ENCODE measurements at regions of chr6 and their contacts with region 1.

Region 1: DNA sequence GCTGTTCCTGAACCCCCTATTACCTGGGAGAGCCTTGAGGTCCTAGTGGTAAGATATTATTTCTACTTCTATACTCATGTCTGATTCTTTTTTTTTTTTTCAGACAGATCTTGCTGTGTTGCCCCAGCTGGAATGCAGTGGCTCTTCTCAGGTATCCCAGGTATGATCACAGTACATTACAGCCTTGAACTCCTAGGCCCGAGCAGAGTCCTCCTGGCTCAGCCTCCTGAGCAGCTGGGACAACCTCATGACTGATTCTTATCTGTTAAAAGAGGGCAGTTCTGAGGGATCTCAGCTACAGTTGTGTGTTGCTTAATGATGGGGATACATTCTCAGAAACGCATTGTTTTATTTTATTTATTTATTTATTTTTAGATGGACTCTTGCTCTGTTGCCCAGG is 30.2 kb downstream of the BAK1 start:
- DNase-seq: no peak
- ATAC-seq: no peak
- H3K4me3 ChIP-seq: no peak overlapping the region
- H3K27ac ChIP-seq: no peak overlapping the region
- H3K4me1 ChIP-seq: peaks cover 4% of the 10 kb centered on the region
- H3K27me3 ChIP-seq: no peaks in the 10 kb centered on the region
- CTCF ChIP-seq: no peak

Region 2: DNA sequence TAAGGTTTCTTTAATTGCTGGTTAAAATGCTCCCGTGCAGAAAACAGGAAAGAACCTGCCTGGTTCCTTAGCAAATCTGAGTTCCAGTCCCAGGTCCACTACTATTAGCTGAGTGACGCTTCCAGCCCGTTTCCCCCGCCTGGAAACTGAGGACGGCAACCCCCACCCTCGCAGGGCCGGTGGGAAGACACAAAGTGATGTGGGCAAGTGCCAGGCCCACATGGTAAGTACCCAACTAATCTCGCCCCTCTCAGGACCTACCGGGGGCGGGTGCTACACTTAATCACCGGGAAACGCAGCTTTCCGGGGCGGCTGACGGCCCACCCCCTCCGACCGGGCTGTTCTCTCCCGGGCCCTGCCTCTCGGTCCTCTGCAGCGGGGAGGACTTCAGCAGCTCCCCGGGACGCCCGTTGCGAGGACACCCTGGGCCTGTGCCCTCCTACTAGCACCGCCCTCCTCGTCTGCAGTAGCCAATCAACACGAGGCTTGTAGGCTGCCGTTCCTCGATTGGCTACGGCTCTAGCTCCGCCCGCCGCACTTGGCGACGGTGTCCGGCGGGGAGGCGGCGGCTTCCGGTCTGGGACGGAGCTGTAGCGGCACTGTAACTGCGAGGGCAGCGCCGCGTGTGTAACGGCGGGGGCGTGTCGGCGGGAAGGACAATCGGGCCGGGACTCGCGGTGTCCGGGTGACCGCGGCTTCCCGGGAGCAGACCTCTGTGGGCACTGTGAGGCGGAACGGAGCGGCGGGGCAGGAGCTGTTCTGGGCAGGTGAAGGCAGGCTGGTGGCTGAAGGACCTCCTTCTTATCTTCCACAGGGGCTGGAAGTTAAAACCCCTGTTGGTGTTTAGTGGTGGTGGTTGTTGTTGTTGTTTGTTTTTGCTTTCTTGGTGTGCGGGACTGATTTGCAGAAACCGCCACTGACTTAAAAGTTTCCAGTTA is 95.6 kb before region 1 on chr6 and contains the start of gene ZBTB9:
- CTCF ChIA-PET with region 1: no interaction called
- POLR2A ChIA-PET with region 1: no interaction called
- intact Hi-C with region 1: loop called (anchors 10 kb)
- DNase-seq: peak; percentile 98
- ATAC-seq: peak; percentile 97
- H3K4me3 ChIP-seq: peak within 1 kb of the TSS; percentile 86
- H3K27ac ChIP-seq: peak within 1 kb of the TSS; percentile 10; the same call in 1 of the 2 replicates
- H3K4me1 ChIP-seq: peaks cover 13% of the 10 kb centered on the region
- H3K27me3 ChIP-seq: no peaks in the 10 kb centered on the region
- CTCF ChIP-seq: no peak
- total RNA-seq, gene ZBTB9: 7.0 and 9.1 TPM in 2 replicates

Region 3: DNA sequence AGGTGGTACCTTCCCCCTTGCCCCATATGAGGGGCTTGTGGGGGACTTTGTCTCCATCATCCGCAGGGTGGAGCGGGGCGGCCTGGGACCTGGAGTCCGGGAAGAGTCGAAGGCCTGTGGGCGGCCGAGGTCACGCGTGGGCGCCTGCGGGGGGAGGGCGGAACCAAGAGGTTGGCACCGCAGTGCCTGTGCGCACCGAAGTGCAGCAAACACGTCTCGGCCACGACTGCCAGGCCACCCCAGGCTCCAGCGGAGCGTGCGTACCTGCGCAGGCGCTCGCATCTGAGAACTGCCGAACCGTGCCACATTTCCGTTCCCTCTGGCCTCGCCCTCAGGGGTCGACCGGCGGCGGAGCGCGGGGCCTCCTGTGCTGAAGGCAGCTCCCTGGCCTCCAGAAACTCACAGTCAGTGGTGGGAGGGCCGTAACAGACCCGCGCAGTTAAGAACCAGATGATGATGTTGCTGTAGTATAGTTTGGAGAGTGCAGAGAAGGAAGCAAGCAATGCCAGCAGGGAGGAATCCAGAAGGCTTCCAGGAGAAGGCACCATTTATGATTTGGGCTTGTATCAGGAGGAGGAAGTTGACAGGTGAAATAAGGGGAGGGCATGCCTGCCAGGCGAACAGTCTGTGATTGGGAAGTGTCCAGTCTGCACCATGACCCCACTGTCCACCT is 43.3 kb after region 1 on chr6:
- CTCF ChIA-PET with region 1: no interaction called
- POLR2A ChIA-PET with region 1: no interaction called
- intact Hi-C with region 1: no loop called
- DNase-seq: no peak
- ATAC-seq: no peak
- H3K4me3 ChIP-seq: peak overlapping the region; percentile 24; the same call in 1 of the 2 replicates
- H3K27ac ChIP-seq: no peak overlapping the region
- H3K4me1 ChIP-seq: peaks cover 37% of the 10 kb centered on the region
- H3K27me3 ChIP-seq: no peaks in the 10 kb centered on the region
- CTCF ChIP-seq: no peak

Region 4: GRCh38 chr6:33665957-33666356 is 116.1 kb after region 1 on chr6:
- CTCF ChIA-PET with region 1: no interaction called
- POLR2A ChIA-PET with region 1: no interaction called
- intact Hi-C with region 1: no loop called
- DNase-seq: no peak
- ATAC-seq: no peak
- H3K4me3 ChIP-seq: no peak overlapping the region
- H3K27ac ChIP-seq: no peak overlapping the region
- H3K4me1 ChIP-seq: peaks cover 10% of the 10 kb centered on the region
- H3K27me3 ChIP-seq: no peaks in the 10 kb centered on the region
- CTCF ChIP-seq: 0 out of 2 replicates have a peak, but pooled peaks have one; percentile 15

Measured in PC-3 (cell line).